ENCODE measurements at regions of chr5 and their contacts with region 1.

Region 1: GRCh38 chr5:132227485-132228240 is at the start of gene P4HA2:
- DNase-seq: peak; percentile 86

Region 2: DNA sequence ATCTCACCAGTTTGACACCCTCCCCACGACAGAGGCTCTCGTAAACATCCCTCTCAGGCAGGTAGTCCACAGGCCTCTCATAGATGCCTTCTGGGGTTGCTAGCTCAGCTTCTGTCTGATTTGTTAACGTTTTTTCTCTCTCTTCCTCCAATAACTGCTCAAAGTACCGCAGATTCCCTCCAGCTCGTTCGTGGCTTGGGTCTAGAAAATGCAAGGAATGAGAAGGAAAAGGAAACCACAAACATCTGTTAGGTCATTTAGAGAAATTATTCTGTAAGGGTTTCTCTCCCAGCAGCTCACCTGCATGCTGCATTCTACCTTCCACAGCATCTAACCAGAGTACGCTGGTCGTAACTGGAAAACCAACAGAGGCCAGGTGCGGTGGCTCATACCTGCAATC is 18.5 kb before region 1 on chr5:
- CTCF ChIA-PET with region 1: no interaction called
- POLR2A ChIA-PET with region 1: interaction called, 14 read pairs
- DNase-seq: no peak